Heart right ventricle (tissue), 16 donors: ENCODE measurements at regions of chr10 and their contacts with region 1.

Region 1: DNA sequence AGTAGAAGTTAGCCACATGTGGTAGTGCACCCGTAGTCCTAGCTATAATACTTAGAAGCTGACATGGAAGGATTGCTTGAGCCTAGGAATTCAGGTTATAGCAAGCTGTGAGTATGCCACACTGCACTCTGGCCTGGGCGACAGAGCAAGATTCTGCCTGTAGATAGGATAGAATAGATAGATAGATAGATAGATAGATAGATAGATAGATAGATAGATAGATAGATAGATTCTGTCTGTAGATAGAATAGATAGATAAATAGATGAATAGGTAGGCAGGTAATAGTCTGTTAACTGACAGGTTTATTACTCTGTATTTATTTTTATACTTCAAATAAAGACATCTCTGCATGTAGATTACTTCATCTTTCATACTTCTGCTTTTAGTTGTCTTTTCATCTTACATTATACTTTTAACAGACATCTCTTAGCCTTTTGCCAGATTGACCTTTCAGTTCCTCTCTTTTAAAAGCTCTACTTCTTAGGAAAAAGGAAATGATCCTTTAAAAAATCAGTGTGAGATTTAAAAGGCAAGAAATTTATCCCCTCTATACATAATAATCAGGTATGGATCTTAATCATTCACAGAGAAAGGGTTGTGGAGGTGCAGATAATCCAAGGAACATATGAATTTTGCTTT is 31.8 kb downstream of the CCAR1 start:
- DNase-seq: no peak
- ATAC-seq: no peak
- H3K4me3 ChIP-seq: no peak overlapping the region
- H3K27ac ChIP-seq: no peak overlapping the region
- H3K4me1 ChIP-seq: no peaks in the 10 kb centered on the region
- H3K27me3 ChIP-seq: no peaks in the 10 kb centered on the region
- CTCF ChIP-seq: no peak

Region 2: DNA sequence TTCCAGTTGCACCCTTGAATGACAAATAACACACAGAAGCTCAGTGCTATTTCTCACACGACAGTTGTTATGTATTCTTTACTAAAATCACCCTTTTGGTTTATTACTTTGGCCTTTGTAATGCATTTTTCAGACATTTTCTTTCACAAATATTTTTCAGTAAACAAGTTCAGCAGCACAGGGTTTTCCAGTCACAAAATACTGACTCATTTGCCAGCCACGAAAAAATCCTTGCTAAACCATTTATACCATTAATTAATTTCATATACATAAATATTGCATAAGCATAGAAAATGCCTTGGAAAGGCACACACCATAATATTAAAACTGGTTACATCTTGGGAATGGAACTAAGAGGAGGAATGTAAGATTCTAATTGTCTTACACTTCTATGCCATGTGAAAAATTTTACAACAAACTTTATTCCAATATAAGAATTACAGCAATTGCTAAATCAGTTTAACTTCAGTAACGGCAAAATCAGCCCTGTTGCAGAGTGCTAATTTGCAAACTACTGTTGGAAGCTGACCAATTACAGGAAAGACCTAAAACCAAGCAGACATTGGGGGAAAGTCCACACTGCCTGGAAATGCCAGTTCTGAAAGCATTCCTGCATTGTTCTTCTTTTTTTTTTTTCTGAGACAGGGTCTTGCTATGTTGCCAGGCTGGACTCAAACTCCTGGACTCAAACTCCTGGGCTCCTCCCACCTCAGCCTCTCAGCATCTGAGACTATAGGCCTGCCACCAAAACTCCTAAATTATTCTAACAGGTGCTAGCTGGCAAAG is 388.5 kb before region 1 on chr10:
- intact Hi-C with region 1: loop called in 1 of 10 experiments (anchors 10 kb)
- DNase-seq: no peak
- ATAC-seq: no peak
- H3K4me3 ChIP-seq: no peak overlapping the region
- H3K27ac ChIP-seq: no peak overlapping the region
- H3K4me1 ChIP-seq: no peaks in the 10 kb centered on the region
- H3K27me3 ChIP-seq: no peaks in the 10 kb centered on the region
- CTCF ChIP-seq: no peak

Region 3: DNA sequence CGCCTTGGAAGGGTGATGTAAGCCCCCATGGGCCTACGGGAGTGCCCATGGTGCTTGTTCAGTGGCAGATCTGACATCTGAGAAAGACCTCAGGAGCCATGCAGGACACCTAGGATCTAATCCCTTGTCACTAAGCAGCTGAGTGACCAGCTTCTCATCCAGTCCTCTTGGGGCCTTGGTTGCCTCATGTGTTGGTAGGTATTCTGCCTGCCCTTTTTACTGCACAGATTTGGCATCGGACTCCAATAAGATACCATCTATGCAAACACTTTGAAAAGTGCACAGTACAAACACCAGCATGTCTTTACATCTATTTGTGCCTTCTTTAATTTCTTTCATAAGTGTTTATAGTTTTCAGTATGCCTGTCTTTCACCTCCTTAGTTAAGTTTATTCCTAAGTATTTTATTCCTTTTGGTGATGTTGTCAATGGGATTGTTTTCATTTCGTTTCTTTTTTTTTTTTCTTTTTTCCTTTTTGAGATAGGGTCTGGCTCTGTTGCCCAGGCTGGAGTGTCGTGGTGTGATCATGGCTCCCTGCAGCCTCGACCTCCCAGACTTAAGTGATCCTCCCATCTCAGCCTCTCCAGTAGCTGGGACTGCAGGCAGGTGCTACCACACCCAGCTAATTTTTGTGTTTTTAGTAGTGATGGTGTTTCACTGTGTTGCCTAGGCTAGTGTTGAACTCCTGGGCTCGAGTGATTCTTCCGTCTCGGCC is 84.9 kb after region 1 on chr10:
- intact Hi-C with region 1: no loop called
- DNase-seq: no peak
- ATAC-seq: no peak
- H3K4me3 ChIP-seq: no peak overlapping the region
- H3K27ac ChIP-seq: no peak overlapping the region
- H3K4me1 ChIP-seq: no peaks in the 10 kb centered on the region
- H3K27me3 ChIP-seq: no peaks in the 10 kb centered on the region
- CTCF ChIP-seq: no peak

Region 4: DNA sequence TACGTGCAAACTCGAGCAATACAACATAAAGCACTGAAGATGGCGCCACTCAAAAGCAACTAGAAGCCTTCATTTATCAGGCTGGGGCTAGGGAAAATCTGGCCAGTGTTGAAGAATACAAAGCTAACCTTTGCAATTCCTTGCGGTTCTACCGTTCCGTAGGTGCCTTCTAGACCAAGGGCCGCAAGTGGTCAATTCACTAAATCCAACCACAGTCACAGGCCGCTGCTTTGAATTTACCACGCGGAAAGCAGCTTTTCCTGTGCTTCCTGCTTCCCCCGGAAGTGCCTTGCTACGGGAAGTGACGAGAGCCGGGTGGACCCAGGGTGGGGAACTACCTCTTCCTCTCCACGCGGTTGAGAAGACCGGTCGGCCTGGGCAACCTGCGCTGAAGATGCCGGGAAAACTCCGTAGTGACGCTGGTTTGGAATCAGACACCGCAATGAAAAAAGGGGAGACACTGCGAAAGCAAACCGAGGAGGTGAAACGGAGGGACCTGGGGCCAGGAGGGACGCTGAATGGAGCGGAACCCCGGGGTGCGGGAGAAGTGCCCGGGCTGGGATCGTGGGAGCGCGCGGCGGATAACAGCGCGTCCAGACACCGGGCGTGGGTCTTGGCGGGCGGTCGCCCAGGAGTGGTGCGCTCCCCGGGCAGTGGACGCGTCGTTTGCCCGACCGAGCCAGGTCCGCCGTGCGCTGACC is 203.2 kb after region 1 on chr10 and contains the start of gene DDX21:
- intact Hi-C with region 1: loop called in 1 of 10 experiments (anchors 10 kb)
- DNase-seq: peak; percentile 84 to 92
- ATAC-seq: peak; percentile 97 to 99 (median 98)
- H3K4me3 ChIP-seq: peak within 1 kb of the TSS; percentile 59 to 99 (median 90)
- H3K27ac ChIP-seq: peak within 1 kb of the TSS; percentile 26 to 95 (median 90)
- H3K4me1 ChIP-seq: peaks cover 3 to 46% (median 22%) of the 10 kb centered on the region in 9 donors
- H3K27me3 ChIP-seq: no peaks in the 10 kb centered on the region
- CTCF ChIP-seq: peak; percentile 25 to 73 (median 52)
- total RNA-seq, gene DDX21: 17.6 to 52.4 (median 25.5) TPM